Activated T-helper 2 cell treated with anti-CD3 and anti-CD28 coated beads, Interferon-gamma antibody, Interleukin-2, Interleukin-4, amounts not matched to agents 10 μg/mL and 5 μg/mL and 100 μg/mL, durations not matched to agents 14 hours and 24 hours and 36 hours (primary cell): ENCODE measurements at regions of chr9 and their contacts with region 1.

Region 1: DNA sequence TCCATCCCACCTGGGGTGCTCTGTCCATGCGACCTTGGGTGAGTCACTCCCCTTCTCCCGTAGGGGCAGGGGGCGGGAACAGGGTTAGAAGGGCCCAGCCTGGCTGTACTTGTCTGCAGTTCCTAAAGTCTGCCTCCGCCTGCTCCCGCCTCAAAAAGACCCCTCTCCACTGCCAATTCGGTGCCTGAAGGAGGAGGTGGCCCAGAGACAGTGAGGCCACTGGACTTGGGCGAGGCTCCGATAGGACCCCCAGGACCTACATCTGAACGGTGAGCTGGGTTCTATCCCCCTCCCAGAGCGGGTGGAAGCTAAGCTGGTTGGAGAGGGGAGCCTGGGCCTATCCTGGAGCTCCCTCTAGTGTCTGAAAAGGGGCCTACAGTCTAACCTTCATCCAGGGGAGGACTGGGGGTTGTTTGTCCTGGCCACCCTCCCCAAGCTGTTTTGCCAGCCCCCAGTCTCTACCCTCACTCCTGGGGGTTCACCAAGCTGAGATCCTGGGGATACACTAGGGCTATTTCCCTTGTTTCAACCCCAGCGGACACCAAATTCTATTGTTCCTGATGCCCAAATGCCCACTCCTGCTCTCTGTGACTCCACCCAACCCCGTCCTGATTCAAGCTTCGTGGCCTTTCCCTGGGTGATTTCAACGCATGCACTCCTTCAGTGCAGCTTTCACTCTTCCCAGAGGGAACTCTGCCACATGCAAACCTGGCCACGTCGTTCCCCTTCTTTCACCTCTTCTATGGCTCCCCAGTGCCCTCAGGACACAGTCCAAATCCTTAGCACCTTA is 6.1 kb upstream of the CRB2 start:
- DNase-seq: peak; percentile 44
- H3K4me3 Mint-ChIP-seq: no peak overlapping the region
- H3K27ac Mint-ChIP-seq: no peak overlapping the region
- H3K4me1 Mint-ChIP-seq: peaks cover 2% of the 10 kb centered on the region
- H3K27me3 Mint-ChIP-seq: peaks cover 7% of the 10 kb centered on the region

Region 2: DNA sequence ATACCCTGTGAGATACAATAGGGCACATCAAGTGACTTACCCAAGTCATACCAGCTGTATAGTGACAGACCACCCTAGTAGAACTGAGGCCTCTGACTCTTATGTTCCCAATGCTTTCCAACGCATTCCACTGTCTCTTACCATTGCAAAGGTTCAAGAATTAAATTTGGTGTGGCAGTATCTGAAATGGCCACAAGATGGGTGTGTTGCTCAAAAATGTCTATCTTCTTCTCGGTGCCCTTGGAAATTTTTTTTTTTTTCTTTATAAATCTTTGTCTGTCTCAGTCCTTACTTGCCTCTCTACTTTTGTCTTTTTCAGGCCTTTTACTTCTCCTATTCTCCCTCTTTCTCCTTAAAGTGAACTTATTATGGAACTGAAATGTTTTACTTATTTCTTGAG is 268.1 kb before region 1 on chr9:
- intact Hi-C with region 1: loop called (anchors 1 kb)
- DNase-seq: no peak
- H3K4me3 Mint-ChIP-seq: no peak overlapping the region
- H3K27ac Mint-ChIP-seq: no peak overlapping the region
- H3K4me1 Mint-ChIP-seq: no peaks in the 10 kb centered on the region
- H3K27me3 Mint-ChIP-seq: no peaks in the 10 kb centered on the region

Region 3: DNA sequence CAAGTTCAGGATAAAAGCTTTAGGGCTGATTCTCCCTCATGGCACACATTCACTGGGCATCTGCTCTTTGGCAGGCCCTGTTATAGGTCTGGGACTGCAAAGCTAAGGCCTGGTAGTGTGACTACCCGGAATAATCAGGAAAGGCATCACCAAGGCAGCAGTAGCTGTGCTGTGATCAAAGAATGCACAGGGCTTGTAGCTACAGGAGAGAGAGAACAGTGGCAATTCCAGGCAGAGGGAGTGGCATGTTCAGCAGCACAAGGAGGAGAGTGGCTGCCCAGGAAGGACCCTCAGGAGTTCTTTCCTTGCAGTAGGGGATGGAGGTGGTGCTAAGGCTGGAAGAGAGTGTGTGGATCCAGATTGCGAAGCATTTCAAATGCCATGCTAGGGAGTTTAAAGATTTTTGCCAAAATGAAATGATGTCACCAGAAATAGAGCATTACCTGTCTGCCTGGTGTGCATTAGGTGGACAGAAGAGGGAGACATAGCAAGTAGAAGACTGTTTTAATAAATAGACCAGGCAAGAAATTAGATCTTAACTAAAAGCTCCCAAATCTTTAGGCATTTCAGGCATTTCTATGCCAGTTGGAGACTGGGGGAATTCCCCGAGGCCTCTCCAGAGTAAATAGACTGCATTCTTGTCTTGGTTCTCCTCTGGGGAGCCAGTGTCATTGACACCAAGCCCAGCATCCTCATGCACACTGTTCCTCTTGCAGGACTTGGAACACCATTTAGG is 247.3 kb before region 1 on chr9:
- intact Hi-C with region 1: loop called (anchors 5 kb)
- DNase-seq: no peak
- H3K4me3 Mint-ChIP-seq: no peak overlapping the region
- H3K27ac Mint-ChIP-seq: no peak overlapping the region
- H3K4me1 Mint-ChIP-seq: no peaks in the 10 kb centered on the region
- H3K27me3 Mint-ChIP-seq: no peaks in the 10 kb centered on the region

Region 4: GRCh38 chr9:123389070-123389469 is 39.2 kb after region 1 on chr9:
- intact Hi-C with region 1: loop called (anchors 1 kb)
- DNase-seq: no peak
- H3K4me3 Mint-ChIP-seq: no peak overlapping the region
- H3K27ac Mint-ChIP-seq: no peak overlapping the region
- H3K4me1 Mint-ChIP-seq: no peaks in the 10 kb centered on the region
- H3K27me3 Mint-ChIP-seq: no peaks in the 10 kb centered on the region